AG04450 (cell line): ENCODE measurements at regions of chr3 and their contacts with region 1.

Region 1: GRCh38 chr3:128617557-128618397 is 32.8 kb downstream of the RPN1 start:
- DNase-seq: peak; percentile 91
- H3K4me3 ChIP-seq: peak overlapping the region; percentile 86
- H3K27ac ChIP-seq: peak overlapping the region; percentile 75
- H3K27me3 ChIP-seq: no peaks in the 10 kb centered on the region
- CTCF ChIP-seq: peak; percentile 87

Region 2: GRCh38 chr3:128598884-128599664 is 18.7 kb before region 1 on chr3:
- CTCF ChIA-PET with region 1: interaction called, 13 read pairs
- POLR2A ChIA-PET with region 1: no interaction called
- DNase-seq: no peak
- H3K4me3 ChIP-seq: no peak overlapping the region
- H3K27ac ChIP-seq: no peak overlapping the region
- H3K27me3 ChIP-seq: no peaks in the 10 kb centered on the region
- CTCF ChIP-seq: no peak

Region 3: DNA sequence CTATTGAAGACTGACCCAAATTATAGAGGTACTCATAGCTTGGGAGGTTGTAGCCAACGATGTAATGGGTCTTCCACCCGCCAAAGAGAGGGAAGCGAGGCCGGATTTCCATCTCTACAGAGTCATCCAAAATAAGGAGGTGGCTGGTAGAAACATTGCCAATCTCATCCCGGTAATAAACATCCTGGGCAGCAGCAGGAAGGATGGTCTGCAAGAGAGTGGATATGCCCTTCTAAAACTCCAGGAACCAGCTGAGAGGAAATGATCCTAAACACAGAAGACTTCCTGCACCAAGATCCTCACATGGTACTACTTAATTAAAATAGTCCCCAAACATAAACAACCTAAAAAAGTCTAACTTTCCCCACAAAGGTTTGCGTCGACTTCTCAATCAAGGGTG is 12.2 kb after region 1 on chr3:
- CTCF ChIA-PET with region 1: interaction called, 28 read pairs
- POLR2A ChIA-PET with region 1: no interaction called
- DNase-seq: no peak
- H3K4me3 ChIP-seq: no peak overlapping the region
- H3K27ac ChIP-seq: no peak overlapping the region
- H3K27me3 ChIP-seq: no peaks in the 10 kb centered on the region
- CTCF ChIP-seq: no peak

Region 4: GRCh38 chr3:128845778-128846485 is 228.2 kb after region 1 on chr3:
- CTCF ChIA-PET with region 1: interaction called, 37 read pairs
- POLR2A ChIA-PET with region 1: interaction called, 3 read pairs
- DNase-seq: no peak
- H3K4me3 ChIP-seq: peak overlapping the region; percentile 49
- H3K27ac ChIP-seq: no peak overlapping the region
- H3K27me3 ChIP-seq: no peaks in the 10 kb centered on the region
- CTCF ChIP-seq: peak; percentile 68

Region 5: GRCh38 chr3:129249276-129250065 is 631.7 kb after region 1 on chr3 and contains the start of gene COPG1:
- CTCF ChIA-PET with region 1: no interaction called
- POLR2A ChIA-PET with region 1: no interaction called
- DNase-seq: peak; percentile 75
- H3K4me3 ChIP-seq: peak within 1 kb of the TSS; percentile 100
- H3K27ac ChIP-seq: peak within 1 kb of the TSS; percentile 97
- H3K27me3 ChIP-seq: no peaks in the 10 kb centered on the region
- CTCF ChIP-seq: no peak
- polyA plus RNA-seq, gene COPG1: 229 and 231 TPM in 2 replicates

Region 6: GRCh38 chr3:129461022-129461421 is 843.2 kb after region 1 on chr3:
- CTCF ChIA-PET with region 1: no interaction called
- POLR2A ChIA-PET with region 1: no interaction called
- DNase-seq: peak; percentile 18
- H3K4me3 ChIP-seq: no peak overlapping the region
- H3K27ac ChIP-seq: no peak overlapping the region
- H3K27me3 ChIP-seq: no peaks in the 10 kb centered on the region
- CTCF ChIP-seq: no peak